Endothelial cell of umbilical vein (primary cell): ENCODE measurements at regions of chr13 and their contacts with region 1.

Region 1: GRCh38 chr13:37602747-37603381 is 4.3 kb upstream of the POSTN start:
- DNase-seq: peak; percentile 55
- H3K4me3 ChIP-seq: no peak overlapping the region
- H3K27ac ChIP-seq: no peak overlapping the region
- H3K4me1 ChIP-seq: peaks cover 12% of the 10 kb centered on the region
- H3K27me3 ChIP-seq: peaks cover 0 to 4% of the 10 kb centered on the region in 2 experiments
- CTCF ChIP-seq: peak; percentile 18 to 24
- POLR2A ChIP-seq: no peak

Region 2: DNA sequence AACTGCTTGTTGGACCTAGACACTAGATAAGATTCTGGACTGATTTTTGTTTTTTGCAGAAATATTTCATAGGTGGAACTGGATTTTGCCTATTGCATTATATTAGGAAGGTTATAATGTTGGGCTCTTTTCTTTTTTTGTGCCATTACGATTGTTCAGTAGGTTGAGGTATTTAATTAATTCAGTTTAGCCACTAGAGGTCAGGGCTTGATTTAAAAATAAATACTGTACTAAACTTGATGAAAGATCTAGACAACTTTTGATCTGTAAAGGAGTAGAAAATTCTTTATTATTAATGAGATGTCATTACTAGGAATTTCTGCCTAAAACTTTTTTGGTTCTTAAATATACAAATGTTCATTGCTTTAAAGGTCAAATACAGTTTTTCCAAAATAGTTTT is 528.2 kb before region 1 on chr13:
- CTCF ChIA-PET with region 1: interaction called, 6 read pairs
- POLR2A ChIA-PET with region 1: no interaction called
- dilution Hi-C with region 1: no loop called
- intact Hi-C with region 1: loop called (anchors 1 kb)
- DNase-seq: peak; percentile 30
- H3K4me3 ChIP-seq: no peak overlapping the region
- H3K27ac ChIP-seq: no peak overlapping the region
- H3K4me1 ChIP-seq: no peaks in the 10 kb centered on the region
- H3K27me3 ChIP-seq: no peaks in the 10 kb centered on the region
- CTCF ChIP-seq: peak in 1 of 2 donors; percentile 17
- POLR2A ChIP-seq: no peak

Region 3: GRCh38 chr13:37270226-37271001 is 332.4 kb before region 1 on chr13:
- CTCF ChIA-PET with region 1: no interaction called
- POLR2A ChIA-PET with region 1: no interaction called
- dilution Hi-C with region 1: no loop called
- intact Hi-C with region 1: loop called (anchors 5 kb)
- DNase-seq: no peak
- H3K4me3 ChIP-seq: no peak overlapping the region
- H3K27ac ChIP-seq: no peak overlapping the region
- H3K4me1 ChIP-seq: no peaks in the 10 kb centered on the region
- H3K27me3 ChIP-seq: peaks cover 1 to 7% of the 10 kb centered on the region in 2 experiments
- CTCF ChIP-seq: no peak
- POLR2A ChIP-seq: no peak